ENCODE measurements at regions of chr6 and their contacts with region 1.

Region 1: GRCh38 chr6:52042141-52042885 is 45.1 kb downstream of the PKHD1 start:
- DNase-seq: no peak
- H3K4me3 ChIP-seq: no peak overlapping the region
- H3K27ac ChIP-seq: no peak overlapping the region
- H3K4me1 ChIP-seq: peaks cover 0 to 6% (median 2%) of the 10 kb centered on the region in 4 donors
- H3K27me3 ChIP-seq: no peaks in the 10 kb centered on the region
- CTCF ChIP-seq: no peak

Region 2: GRCh38 chr6:51963980-51964379 is 78.3 kb before region 1 on chr6:
- intact Hi-C with region 1: no loop called
- DNase-seq: no peak
- H3K4me3 ChIP-seq: no peak overlapping the region
- H3K27ac ChIP-seq: no peak overlapping the region
- H3K4me1 ChIP-seq: no peaks in the 10 kb centered on the region
- H3K27me3 ChIP-seq: no peaks in the 10 kb centered on the region
- CTCF ChIP-seq: no peak

Region 3: GRCh38 chr6:52074155-52074554 is 31.8 kb after region 1 on chr6:
- intact Hi-C with region 1: loop called (anchors 1 kb)
- DNase-seq: no peak
- H3K4me3 ChIP-seq: no peak overlapping the region
- H3K27ac ChIP-seq: no peak overlapping the region
- H3K4me1 ChIP-seq: no peaks in the 10 kb centered on the region
- H3K27me3 ChIP-seq: peaks cover 0 to 6% of the 10 kb centered on the region in 2 donors
- CTCF ChIP-seq: no peak

Region 4: DNA sequence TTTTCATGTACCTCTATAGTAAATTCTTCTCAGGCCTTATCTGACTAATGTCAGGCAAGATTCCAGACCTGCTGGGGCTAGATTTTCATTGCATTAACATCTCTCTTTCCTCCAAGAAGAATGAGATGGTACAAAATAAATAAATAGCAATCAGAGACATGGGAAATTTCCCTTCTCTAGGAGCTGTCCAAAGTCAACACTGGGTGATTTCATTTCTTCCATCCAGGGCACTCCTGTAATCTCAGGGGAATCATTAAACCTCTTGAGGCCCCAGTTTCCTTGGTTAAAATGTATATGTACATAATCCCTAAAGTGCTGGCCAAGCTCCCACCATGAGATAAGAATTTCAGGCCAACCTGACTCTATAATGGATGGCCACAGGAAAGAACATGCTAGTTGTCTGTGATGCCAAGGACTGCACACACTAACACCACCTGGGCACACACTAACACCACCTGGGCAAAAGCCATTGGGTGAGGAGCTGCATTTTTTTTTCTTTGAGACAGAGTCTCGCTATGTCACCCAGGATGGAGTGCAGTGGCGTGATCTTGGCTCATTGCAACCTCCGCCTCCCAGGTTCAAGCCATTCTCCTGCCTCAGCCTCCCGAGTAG is 201.1 kb after region 1 on chr6:
- intact Hi-C with region 1: no loop called
- DNase-seq: no peak
- H3K4me3 ChIP-seq: no peak overlapping the region
- H3K27ac ChIP-seq: no peak overlapping the region
- H3K4me1 ChIP-seq: no peaks in the 10 kb centered on the region
- H3K27me3 ChIP-seq: peaks cover 0 to 3% of the 10 kb centered on the region in 2 donors
- CTCF ChIP-seq: no peak